ENCODE measurements at regions of chr7 and their contacts with region 1.

Region 1: GRCh38 chr7:151244196-151244840 is 4.2 kb downstream of the SMARCD3 start:
- DNase-seq: peak; percentile 82 to 88 (median 85)
- ATAC-seq: peak; percentile 37
- H3K4me3 ChIP-seq: no peak overlapping the region
- H3K27ac ChIP-seq: no peak overlapping the region
- H3K4me1 ChIP-seq: peaks cover 31 to 63% of the 10 kb centered on the region in 2 experiments
- H3K27me3 ChIP-seq: peaks cover 0 to 20% of the 10 kb centered on the region in 2 experiments; a peak in 1 of 5 replicates
- CTCF ChIP-seq: peak; percentile 93 to 98 (median 97)
- EP300 ChIP-seq: no peak
- POLR2A ChIP-seq: no peak
- RAD21 ChIP-seq: peak; percentile 69 to 78

Region 2: DNA sequence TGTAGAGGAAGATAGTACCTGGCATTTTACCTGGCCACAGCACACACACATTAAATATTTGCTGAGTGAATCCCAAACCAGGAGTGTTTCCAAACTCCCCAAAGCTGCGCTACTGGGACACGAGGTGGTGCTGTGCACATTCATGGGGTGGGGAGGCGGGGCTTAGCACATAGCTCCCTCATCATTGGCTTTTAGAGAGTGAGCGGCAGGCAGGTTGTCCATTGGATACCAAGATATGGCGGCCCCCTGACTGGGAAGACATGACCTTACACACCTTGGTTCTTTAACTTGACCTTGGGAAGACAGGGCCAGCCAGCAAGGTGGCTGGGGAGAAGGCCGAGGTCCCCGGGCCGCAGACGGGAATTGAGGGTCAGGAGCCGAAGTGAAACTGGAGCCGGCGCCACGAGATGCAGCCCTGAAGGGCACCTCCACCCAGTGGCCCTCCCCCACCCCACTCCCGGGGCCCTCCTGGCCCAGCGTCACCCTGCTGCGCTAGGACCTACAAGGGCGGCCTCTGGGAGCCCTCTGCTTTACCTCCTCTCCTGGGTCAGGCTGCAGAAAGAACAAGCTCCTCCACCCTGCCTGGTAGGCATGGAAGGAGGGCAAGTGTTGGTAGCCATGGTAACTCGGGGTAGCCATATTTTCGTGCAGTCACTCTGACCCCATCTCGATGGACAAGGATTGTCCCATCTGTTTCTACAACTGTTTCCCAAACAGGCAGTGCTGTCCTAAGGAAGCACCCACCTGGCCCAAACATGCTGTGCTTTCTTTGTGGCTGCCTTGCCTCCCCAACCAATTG is 419.7 kb before region 1 on chr7:
- CTCF ChIA-PET with region 1: no interaction called
- POLR2A ChIA-PET with region 1: no interaction called
- in situ Hi-C with region 1: no loop called
- intact Hi-C with region 1: no loop called
- DNase-seq: peak; percentile 74 to 94 (median 87)
- ATAC-seq: peak; percentile 99
- H3K4me3 ChIP-seq: no peak overlapping the region
- H3K27ac ChIP-seq: peak overlapping the region; percentile 37; the same call in 2 of the 3 replicates
- H3K4me1 ChIP-seq: peaks cover 5 to 11% of the 10 kb centered on the region in 2 experiments; a peak in 3 of 5 replicates
- H3K27me3 ChIP-seq: peaks cover 2 to 19% of the 10 kb centered on the region in 2 experiments; a peak in 2 of 5 replicates
- CTCF ChIP-seq: peak; percentile 40 to 56 (median 50)
- EP300 ChIP-seq: no peak
- POLR2A ChIP-seq: no peak
- RAD21 ChIP-seq: no peak; a peak in 1 of 4 replicates

Region 3: GRCh38 chr7:151068068-151068773 is 176.1 kb before region 1 on chr7:
- CTCF ChIA-PET with region 1: no interaction called
- POLR2A ChIA-PET with region 1: no interaction called
- in situ Hi-C with region 1: no loop called
- intact Hi-C with region 1: no loop called
- DNase-seq: no peak
- ATAC-seq: no peak
- H3K4me3 ChIP-seq: no peak overlapping the region
- H3K27ac ChIP-seq: no peak overlapping the region
- H3K4me1 ChIP-seq: peaks cover 4 to 53% of the 10 kb centered on the region in 2 experiments
- H3K27me3 ChIP-seq: no peaks in the 10 kb centered on the region
- CTCF ChIP-seq: no peak
- EP300 ChIP-seq: no peak
- POLR2A ChIP-seq: no peak
- RAD21 ChIP-seq: no peak

Region 4: GRCh38 chr7:151123822-151124464 is 120.4 kb before region 1 on chr7:
- CTCF ChIA-PET with region 1: interaction called, 32 read pairs
- POLR2A ChIA-PET with region 1: interaction called, 7 read pairs
- in situ Hi-C with region 1: no loop called
- intact Hi-C with region 1: loop called (anchors 1 kb)
- DNase-seq: peak; percentile 95 to 97 (median 96)
- ATAC-seq: peak; percentile 100
- H3K4me3 ChIP-seq: no peak overlapping the region
- H3K27ac ChIP-seq: no peak overlapping the region
- H3K4me1 ChIP-seq: peaks cover 0 to 47% of the 10 kb centered on the region in 2 experiments; a peak in 1 of 5 replicates
- H3K27me3 ChIP-seq: no peaks in the 10 kb centered on the region; a peak in 1 of 5 replicates
- CTCF ChIP-seq: peak; percentile 100
- EP300 ChIP-seq: no peak
- POLR2A ChIP-seq: no peak
- RAD21 ChIP-seq: peak; percentile 86 to 94

Region 5: GRCh38 chr7:151206914-151207313 is 37.4 kb before region 1 on chr7:
- CTCF ChIA-PET with region 1: interaction called, 11 read pairs
- POLR2A ChIA-PET with region 1: interaction called, 4 read pairs
- in situ Hi-C with region 1: no loop called
- intact Hi-C with region 1: loop called (anchors 2 kb)
- DNase-seq: peak in 2 of 4 experiments; percentile 85 to 87
- ATAC-seq: peak; percentile 88
- H3K4me3 ChIP-seq: no peak overlapping the region
- H3K27ac ChIP-seq: no peak overlapping the region
- H3K4me1 ChIP-seq: peaks cover 15 to 19% of the 10 kb centered on the region in 2 experiments
- H3K27me3 ChIP-seq: peaks cover 40% of the 10 kb centered on the region in 2 experiments; a peak in 4 of 5 replicates
- CTCF ChIP-seq: no peak
- EP300 ChIP-seq: peak; percentile 66
- POLR2A ChIP-seq: no peak
- RAD21 ChIP-seq: no peak

Region 6: DNA sequence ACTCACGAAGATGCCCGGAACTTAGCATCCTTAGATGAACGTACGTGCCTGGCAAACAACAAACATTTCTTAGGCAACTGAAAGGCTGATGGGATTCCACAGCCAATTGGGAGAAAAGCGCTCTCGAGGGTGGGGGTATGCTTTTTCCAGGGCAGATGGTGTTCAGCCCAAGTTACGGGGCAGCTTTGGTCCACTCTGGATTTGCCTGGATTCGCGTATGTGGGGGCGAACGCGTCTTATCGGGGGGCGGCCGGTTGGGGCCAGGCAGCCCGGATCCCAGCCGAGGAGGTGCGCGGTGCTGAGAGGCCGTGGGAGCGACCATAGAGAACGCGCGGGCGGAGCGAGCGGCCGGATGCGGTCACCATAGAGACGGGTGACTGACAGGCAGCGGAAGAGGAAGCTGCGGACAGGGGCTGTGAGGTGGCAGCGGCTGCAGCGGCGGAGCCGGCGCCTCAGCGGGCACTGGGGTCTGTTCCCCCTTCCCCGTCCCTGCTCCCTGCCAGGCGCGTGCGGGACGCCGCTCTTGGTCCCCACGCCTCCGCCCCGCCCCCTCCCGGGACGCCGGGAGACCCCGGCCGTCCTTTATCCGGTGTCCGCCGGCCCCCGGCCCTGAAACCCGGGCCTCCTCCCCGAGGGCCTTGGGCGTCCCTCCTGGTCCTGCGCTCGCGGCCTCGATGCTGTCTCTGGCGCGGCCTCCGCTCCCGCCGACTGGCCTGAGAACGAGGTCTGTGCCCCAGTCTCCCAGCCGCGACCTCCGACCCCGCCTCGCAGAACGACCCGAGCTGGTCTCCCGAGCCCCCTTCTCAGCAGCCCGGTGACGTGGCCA is 12.0 kb before region 1 on chr7 and contains the start of gene CHPF2:
- CTCF ChIA-PET with region 1: interaction called, 3 read pairs
- POLR2A ChIA-PET with region 1: interaction called, 36 read pairs
- in situ Hi-C with region 1: no loop called
- intact Hi-C with region 1: loop called (anchors 2 kb)
- DNase-seq: peak; percentile 96 to 98 (median 97)
- ATAC-seq: peak; percentile 97
- H3K4me3 ChIP-seq: peak within 1 kb of the TSS; percentile 92
- H3K27ac ChIP-seq: peak within 1 kb of the TSS; percentile 81
- H3K4me1 ChIP-seq: peaks cover 24 to 42% of the 10 kb centered on the region in 2 experiments; a peak in 4 of 5 replicates
- H3K27me3 ChIP-seq: no peaks in the 10 kb centered on the region
- CTCF ChIP-seq: no peak; a peak in 1 of 6 replicates
- EP300 ChIP-seq: peak; percentile 34; the same call in 1 of the 2 replicates
- POLR2A ChIP-seq: peak; percentile 81
- RAD21 ChIP-seq: no peak
- polyA plus RNA-seq, gene CHPF2: 0.08 to 0.24 TPM

Region 7: GRCh38 chr7:151351027-151351426 is 106.7 kb after region 1 on chr7:
- CTCF ChIA-PET with region 1: no interaction called
- POLR2A ChIA-PET with region 1: interaction called, 4 read pairs
- in situ Hi-C with region 1: no loop called
- intact Hi-C with region 1: loop called (anchors 1 kb)
- DNase-seq: peak; percentile 57 to 72 (median 62)
- ATAC-seq: peak; percentile 79
- H3K4me3 ChIP-seq: no peak overlapping the region
- H3K27ac ChIP-seq: no peak overlapping the region
- H3K4me1 ChIP-seq: peaks cover 4 to 11% of the 10 kb centered on the region in 2 experiments; a peak in 4 of 5 replicates
- H3K27me3 ChIP-seq: no peaks in the 10 kb centered on the region
- CTCF ChIP-seq: peak; percentile 68 to 75 (median 71)
- EP300 ChIP-seq: no peak
- POLR2A ChIP-seq: no peak
- RAD21 ChIP-seq: peak in 1 of 2 experiments; percentile 30; a peak in 1 of 4 replicates

Measured in K562 (cell line).